SK-N-SH (cell line): ENCODE measurements at regions of chr19 and their contacts with region 1.

Region 1: GRCh38 chr19:40798223-40798996 is 581 bp upstream of the EGLN2 start:
- DNase-seq: peak; percentile 77
- H3K4me3 ChIP-seq: peak overlapping the region; percentile 50 to 65
- H3K27ac ChIP-seq: peak overlapping the region; percentile 84 to 89
- H3K4me1 ChIP-seq: peaks cover 31 to 37% of the 10 kb centered on the region in 2 experiments; a peak in 2 of 4 replicates
- H3K27me3 ChIP-seq: no peaks in the 10 kb centered on the region
- CTCF ChIP-seq: peak; percentile 65
- EP300 ChIP-seq: no peak
- RAD21 ChIP-seq: peak; percentile 14; the same call in 1 of the 2 replicates

Region 2: GRCh38 chr19:40777937-40778705 is 20.3 kb before region 1 on chr19 and contains the start of gene RAB4B:
- CTCF ChIA-PET with region 1: interaction called, 20 read pairs
- POLR2A ChIA-PET with region 1: interaction called, 31 read pairs
- DNase-seq: peak; percentile 93
- H3K4me3 ChIP-seq: peak within 1 kb of the TSS; percentile 61 to 67
- H3K27ac ChIP-seq: peak within 1 kb of the TSS; percentile 97 to 99
- H3K4me1 ChIP-seq: peaks cover 6 to 9% of the 10 kb centered on the region in 2 experiments; a peak in 2 of 4 replicates
- H3K27me3 ChIP-seq: no peaks in the 10 kb centered on the region
- CTCF ChIP-seq: no peak
- EP300 ChIP-seq: no peak
- RAD21 ChIP-seq: no peak
- polyA plus RNA-seq, gene RAB4B: 49.1 and 53.2 TPM in 2 replicates

Region 3: GRCh38 chr19:40785526-40785925 is 12.9 kb before region 1 on chr19:
- CTCF ChIA-PET with region 1: interaction called, 10 read pairs
- POLR2A ChIA-PET with region 1: no interaction called
- DNase-seq: no peak
- H3K4me3 ChIP-seq: no peak overlapping the region
- H3K27ac ChIP-seq: no peak overlapping the region
- H3K4me1 ChIP-seq: no peaks in the 10 kb centered on the region
- H3K27me3 ChIP-seq: no peaks in the 10 kb centered on the region
- CTCF ChIP-seq: no peak
- EP300 ChIP-seq: no peak
- RAD21 ChIP-seq: no peak